Head of caudate nucleus (tissue), 42 donors: ENCODE measurements at regions of chr3 and their contacts with region 1.

Region 1: DNA sequence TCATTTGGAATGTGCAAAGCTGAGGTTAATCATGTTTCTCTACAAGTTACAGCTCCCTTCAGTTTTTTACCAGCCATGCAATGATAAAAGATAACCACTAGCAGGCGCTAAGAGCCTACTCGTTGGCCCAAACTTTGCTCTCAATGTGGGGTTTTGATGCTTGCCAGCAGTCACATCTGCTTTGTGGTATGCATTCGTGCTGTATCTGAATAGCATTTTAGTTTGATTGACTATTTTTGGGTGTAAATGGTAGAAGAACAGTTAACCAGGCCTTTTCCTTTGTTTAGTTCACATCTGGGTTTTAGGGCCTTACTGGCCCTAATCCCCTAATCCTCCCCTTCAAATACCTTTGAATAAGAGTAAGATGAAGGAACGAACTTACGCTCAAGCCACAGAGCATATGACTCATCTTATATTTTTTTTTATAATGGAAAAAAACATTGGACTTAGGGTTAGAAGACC is 4.4 kb upstream of the CLDN11 start:
- DNase-seq: peak in 33 of 42 donors; percentile 34 to 86 (median 67)

Region 2: DNA sequence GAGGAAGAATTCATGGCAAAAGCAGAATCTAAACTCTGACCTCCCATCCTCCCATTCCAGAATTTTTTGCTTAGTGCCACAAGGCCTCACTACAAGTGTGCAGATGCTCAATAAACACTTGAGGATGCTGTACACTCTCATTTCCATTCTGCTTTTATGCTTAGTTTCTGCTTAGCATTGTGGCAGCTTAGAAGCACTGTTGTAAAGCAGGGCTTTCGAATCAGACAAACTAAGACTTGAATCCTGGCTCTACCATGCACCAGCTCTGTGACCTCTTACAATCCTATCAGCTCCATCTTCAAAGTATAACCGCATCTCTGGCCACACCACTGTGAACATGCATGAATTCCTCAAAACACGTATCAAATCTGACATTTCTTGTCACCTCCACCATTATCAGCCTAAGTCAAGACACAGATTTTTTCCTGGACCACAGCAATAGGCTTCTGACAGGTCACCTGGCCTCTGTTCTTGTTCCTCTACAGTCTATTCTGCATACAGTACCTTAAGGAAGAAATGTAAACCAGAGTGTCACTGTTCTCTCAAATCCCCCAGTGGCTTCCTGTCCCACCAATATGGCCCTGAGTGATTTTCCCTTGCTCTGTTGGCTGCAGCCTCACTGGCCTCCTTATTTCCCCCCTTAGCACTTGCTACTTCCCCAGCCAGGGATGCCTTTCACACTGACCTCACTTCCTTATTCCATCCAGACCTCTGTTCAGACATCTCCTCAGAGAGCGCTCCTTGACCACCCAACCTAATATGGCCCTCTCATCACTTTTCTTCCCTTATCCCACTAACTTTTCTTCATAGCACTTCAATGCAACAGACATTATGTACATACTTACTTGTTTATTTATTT is 224.6 kb before region 1 on chr3:
- intact Hi-C with region 1: loop called (anchors 5 kb)
- DNase-seq: no peak

Region 3: GRCh38 chr3:170307671-170308403 is 106.4 kb before region 1 on chr3:
- intact Hi-C with region 1: loop called (anchors 5 kb)
- DNase-seq: peak in 1 of 42 donors; percentile 9

Region 4: DNA sequence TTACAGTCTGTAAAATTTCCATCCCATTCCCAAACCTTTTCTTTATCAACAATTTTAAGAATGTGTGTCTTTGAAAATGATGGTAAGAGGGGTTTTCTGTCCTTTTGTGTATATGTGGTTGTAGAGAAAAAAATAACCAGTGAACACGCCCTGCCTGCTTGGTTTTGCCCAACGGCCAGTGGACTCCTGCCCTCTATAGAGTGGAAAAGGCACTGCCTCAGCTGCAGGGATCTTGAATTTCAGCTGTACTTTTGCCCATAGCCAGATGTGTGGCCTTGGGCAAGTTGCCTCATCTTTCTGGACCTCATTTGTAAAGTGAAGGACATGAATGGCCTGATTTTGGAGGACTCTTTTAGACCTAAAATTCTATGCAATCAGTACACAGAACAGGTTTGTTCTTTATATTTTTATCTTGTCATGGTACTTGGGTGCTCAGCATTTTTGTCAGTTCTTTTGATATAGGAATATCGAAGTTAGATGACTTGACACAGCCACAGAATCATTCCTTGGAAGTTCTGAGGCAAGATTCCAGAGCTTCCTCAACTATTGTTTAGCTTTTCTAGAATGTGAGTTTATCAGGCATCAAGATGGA is 85.4 kb after region 1 on chr3:
- intact Hi-C with region 1: loop called (anchors 5 kb)
- DNase-seq: peak in 40 of 42 donors; percentile 21 to 88 (median 65)

Region 5: GRCh38 chr3:170689893-170690660 is 275.8 kb after region 1 on chr3:
- intact Hi-C with region 1: loop called (anchors 10 kb)
- DNase-seq: peak; percentile 59 to 94 (median 83)

Region 6: GRCh38 chr3:170811928-170812591 is 397.8 kb after region 1 on chr3:
- intact Hi-C with region 1: loop called (anchors 5 kb)
- DNase-seq: peak in 41 of 42 donors; percentile 25 to 91 (median 77)